IMR-90 (cell line): ENCODE measurements at regions of chr20 and their contacts with region 1.

Region 1: GRCh38 chr20:32336918-32337347 is 21.2 kb upstream of the ASXL1 start:
- DNase-seq: peak; percentile 54
- ATAC-seq: peak; percentile 91
- H3K4me3 ChIP-seq: no peak overlapping the region
- H3K27ac ChIP-seq: no peak overlapping the region
- H3K4me1 ChIP-seq: peaks cover 4% of the 10 kb centered on the region
- H3K27me3 ChIP-seq: no peaks in the 10 kb centered on the region
- CTCF ChIP-seq: peak; percentile 69
- POLR2A ChIP-seq: no peak
- RAD21 ChIP-seq: peak; percentile 72

Region 2: DNA sequence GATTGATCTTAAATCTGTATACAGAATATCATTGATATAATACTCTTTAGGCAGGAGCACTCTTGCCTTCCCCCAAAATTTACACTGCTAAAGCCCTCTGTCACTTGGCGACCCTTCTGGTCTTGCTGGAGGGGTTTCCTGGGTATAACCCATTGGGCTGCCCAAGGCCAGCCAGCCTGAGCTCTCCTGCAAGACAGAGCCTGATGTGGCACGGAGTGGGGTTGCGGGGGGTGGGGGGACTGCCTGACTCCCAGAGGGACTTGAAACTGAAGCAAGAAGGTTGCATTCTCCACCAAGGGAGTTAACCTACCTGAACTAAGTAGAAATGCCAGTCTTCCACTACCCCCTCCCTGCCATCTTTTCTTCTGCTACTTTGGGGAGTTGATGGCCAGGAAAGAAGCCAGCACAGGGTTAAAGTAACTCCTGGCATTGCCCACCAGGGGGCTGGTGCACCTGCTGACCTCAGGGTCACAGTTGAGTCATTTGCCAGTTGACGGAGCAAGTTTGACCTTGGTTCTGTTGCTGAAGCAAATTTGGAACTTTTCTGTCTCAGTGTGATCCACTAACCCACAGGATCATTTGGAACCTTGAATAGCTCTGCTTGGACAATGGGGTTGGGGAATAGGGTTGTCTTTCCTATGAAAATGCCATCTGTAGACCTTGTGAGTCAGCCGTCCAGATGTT is 100.6 kb after region 1 on chr20:
- CTCF ChIA-PET with region 1: no interaction called
- POLR2A ChIA-PET with region 1: no interaction called
- dilution Hi-C with region 1: no loop called
- in situ Hi-C with region 1: no loop called
- intact Hi-C with region 1: loop called (anchors 5 kb)
- DNase-seq: no peak
- ATAC-seq: no peak
- H3K4me3 ChIP-seq: no peak overlapping the region
- H3K27ac ChIP-seq: no peak overlapping the region
- H3K4me1 ChIP-seq: peaks cover 7% of the 10 kb centered on the region
- H3K27me3 ChIP-seq: no peaks in the 10 kb centered on the region
- CTCF ChIP-seq: 0 out of 2 replicates have a peak, but pooled peaks have one; percentile 18
- POLR2A ChIP-seq: no peak
- RAD21 ChIP-seq: no peak

Region 3: GRCh38 chr20:32521780-32522525 is 185.0 kb after region 1 on chr20:
- CTCF ChIA-PET with region 1: no interaction called
- POLR2A ChIA-PET with region 1: no interaction called
- dilution Hi-C with region 1: no loop called
- in situ Hi-C with region 1: no loop called
- intact Hi-C with region 1: no loop called
- DNase-seq: peak; percentile 49
- ATAC-seq: peak; percentile 94
- H3K4me3 ChIP-seq: no peak overlapping the region
- H3K27ac ChIP-seq: no peak overlapping the region
- H3K4me1 ChIP-seq: peaks cover 4% of the 10 kb centered on the region; the same call in 1 of the 2 replicates
- H3K27me3 ChIP-seq: peaks cover 4% of the 10 kb centered on the region; the same call in 1 of the 2 replicates
- CTCF ChIP-seq: peak; percentile 95
- POLR2A ChIP-seq: peak; percentile 58
- RAD21 ChIP-seq: peak; percentile 100